Activated naive CD4-positive, alpha-beta T cell treated with anti-CD3 and anti-CD28 coated beads for 36 hours (primary cell): ENCODE measurements at regions of chr11 and their contacts with region 1.

Region 1: DNA sequence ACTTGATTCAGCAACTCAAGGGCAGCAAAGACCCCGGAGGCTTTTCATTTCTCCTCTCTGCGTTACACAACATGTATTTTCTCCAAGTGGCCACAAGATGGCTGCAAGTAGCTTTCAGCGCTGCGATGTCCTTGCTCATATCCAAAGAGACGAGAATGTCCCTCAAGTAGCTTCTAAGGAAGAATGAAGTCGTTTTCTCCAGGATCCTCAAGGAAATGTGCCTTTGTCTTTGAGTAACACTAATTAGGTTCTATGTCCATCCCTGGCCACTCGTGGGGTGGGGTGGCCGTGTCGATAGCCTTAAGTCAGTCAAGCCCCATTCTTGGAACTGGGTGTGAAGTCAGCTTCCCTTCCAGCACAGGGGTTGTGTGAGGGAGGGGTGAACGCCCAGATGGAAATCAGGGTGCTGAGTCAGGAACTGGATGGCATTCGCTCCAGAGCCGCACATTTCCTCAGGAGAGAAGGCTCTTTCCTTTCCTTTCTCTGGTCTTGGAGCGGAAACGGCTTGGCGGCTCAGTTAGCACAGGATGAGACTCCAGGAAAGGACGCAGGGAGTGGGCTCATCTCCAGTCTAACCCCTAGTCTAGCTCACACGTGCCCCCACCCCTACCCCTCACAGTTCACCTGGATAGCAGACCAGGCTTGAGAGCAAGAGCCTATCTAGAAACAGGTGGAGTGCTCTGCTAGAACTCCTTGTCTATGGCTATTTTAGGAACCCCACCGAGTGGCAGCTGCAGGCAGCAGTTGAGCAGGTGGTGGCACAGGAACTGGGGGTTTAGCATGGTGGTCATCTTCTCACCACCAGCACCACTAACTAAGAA is 44.3 kb downstream of the NNMT start:
- DNase-seq: peak; percentile 56
- H3K4me3 Mint-ChIP-seq: peak overlapping the region; percentile 55
- H3K27ac Mint-ChIP-seq: no peak overlapping the region
- H3K4me1 Mint-ChIP-seq: peaks cover 13% of the 10 kb centered on the region
- H3K27me3 Mint-ChIP-seq: no peaks in the 10 kb centered on the region

Region 2: GRCh38 chr11:114280696-114281095 is 59.8 kb before region 1 on chr11:
- CTCF ChIA-PET with region 1: interaction called, 6 read pairs
- intact Hi-C with region 1: loop called (anchors 2 kb)
- DNase-seq: peak; percentile 47
- H3K4me3 Mint-ChIP-seq: no peak overlapping the region
- H3K27ac Mint-ChIP-seq: no peak overlapping the region
- H3K4me1 Mint-ChIP-seq: no peaks in the 10 kb centered on the region
- H3K27me3 Mint-ChIP-seq: peaks cover 5% of the 10 kb centered on the region

Region 3: DNA sequence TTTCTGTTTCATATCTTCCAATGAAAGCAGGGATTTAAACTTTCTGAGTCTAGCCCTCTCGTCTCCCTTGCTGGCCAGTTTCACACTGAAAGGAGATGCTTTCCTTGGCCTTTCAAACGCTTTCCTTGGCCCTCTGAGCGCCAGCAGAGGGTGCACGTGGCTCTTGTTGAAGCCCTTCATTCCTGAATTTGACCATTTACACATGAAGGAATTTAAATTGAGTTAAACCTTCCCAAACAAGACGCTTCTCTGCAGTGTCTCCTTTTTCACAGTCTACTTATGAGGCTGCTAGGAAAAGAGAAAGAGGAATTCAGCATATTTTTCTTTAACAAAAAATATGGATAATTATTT is 22.8 kb before region 1 on chr11:
- CTCF ChIA-PET with region 1: interaction called, 3 read pairs
- intact Hi-C with region 1: loop called (anchors 2 kb)
- DNase-seq: peak; percentile 20
- H3K4me3 Mint-ChIP-seq: no peak overlapping the region
- H3K27ac Mint-ChIP-seq: no peak overlapping the region
- H3K4me1 Mint-ChIP-seq: peaks cover 45% of the 10 kb centered on the region
- H3K27me3 Mint-ChIP-seq: no peaks in the 10 kb centered on the region

Region 4: DNA sequence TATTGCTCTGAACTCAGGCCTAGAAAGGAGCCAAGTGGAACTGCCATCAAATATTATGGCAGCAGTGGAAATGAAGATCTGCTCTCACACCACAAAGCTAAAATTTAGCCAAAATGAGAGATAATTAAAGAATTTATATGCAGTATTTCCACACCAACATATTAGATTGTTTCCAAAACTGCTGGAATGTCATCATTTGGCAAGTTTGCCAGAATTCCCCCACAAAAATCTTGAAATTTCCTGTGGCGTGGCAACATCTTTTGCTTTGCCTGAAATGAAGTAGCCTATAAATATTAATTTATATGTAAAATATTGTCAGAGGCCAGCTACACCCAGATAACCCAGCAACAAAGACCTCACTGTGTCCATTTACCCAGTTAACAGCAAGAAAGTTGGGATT is 46.0 kb after region 1 on chr11:
- CTCF ChIA-PET with region 1: no interaction called
- intact Hi-C with region 1: no loop called
- DNase-seq: no peak
- H3K4me3 Mint-ChIP-seq: no peak overlapping the region
- H3K27ac Mint-ChIP-seq: no peak overlapping the region
- H3K4me1 Mint-ChIP-seq: no peaks in the 10 kb centered on the region
- H3K27me3 Mint-ChIP-seq: peaks cover 2% of the 10 kb centered on the region

Region 5: DNA sequence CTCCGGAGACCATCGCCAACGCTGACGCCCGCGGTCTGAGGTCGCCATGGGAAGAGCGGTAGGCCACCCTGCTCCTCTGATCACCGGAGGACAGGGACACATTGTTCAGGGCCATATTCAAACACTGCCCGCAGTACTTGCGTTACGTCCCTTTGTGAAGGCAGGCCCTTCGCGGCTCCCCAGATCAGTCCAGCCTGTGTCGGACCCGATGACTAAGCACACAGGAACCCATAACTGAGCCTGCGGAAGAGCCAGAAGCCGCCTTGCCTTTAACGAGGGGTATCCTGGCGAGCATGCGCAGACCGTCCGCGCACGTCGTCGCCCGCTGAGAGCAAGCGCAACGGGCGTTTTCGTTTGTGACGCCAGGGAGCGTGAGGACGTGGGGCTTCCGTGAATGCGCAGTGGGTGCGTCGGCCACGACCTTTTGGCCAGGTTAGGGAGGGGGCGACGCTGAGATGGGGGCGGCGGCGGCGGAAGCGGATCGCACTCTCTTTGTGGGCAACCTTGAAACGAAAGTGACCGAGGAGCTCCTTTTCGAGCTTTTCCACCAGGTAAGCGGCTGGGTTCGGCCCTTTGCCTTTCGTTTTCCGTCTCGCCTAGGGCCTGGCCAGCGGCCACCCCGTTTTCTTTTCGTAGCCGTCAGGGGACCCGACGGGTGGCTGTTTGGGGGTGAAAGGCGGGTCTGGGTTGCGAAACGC is 59.8 kb after region 1 on chr11 and contains the starts of genes C11orf71 and RBM7:
- CTCF ChIA-PET with region 1: interaction called, 7 read pairs
- intact Hi-C with region 1: loop called (anchors 2 kb)
- DNase-seq: peak; percentile 98
- H3K4me3 Mint-ChIP-seq: peak within 1 kb of the TSS; percentile 90
- H3K27ac Mint-ChIP-seq: peak within 1 kb of the TSS; percentile 97
- H3K4me1 Mint-ChIP-seq: peaks cover 44% of the 10 kb centered on the region
- H3K27me3 Mint-ChIP-seq: no peaks in the 10 kb centered on the region
- total RNA-seq, gene C11orf71: 7.5 to 7.6 TPM
- total RNA-seq, gene RBM7: 36.9 to 41.7 TPM

Region 6: GRCh38 chr11:114606003-114606801 is 265.7 kb after region 1 on chr11:
- CTCF ChIA-PET with region 1: no interaction called
- intact Hi-C with region 1: loop called (anchors 2 kb)
- DNase-seq: no peak
- H3K4me3 Mint-ChIP-seq: no peak overlapping the region
- H3K27ac Mint-ChIP-seq: no peak overlapping the region
- H3K4me1 Mint-ChIP-seq: no peaks in the 10 kb centered on the region
- H3K27me3 Mint-ChIP-seq: no peaks in the 10 kb centered on the region

Region 7: GRCh38 chr11:114762408-114762807 is 421.9 kb after region 1 on chr11:
- CTCF ChIA-PET with region 1: no interaction called
- intact Hi-C with region 1: loop called (anchors 2 kb)
- DNase-seq: peak; percentile 42
- H3K4me3 Mint-ChIP-seq: no peak overlapping the region
- H3K27ac Mint-ChIP-seq: no peak overlapping the region
- H3K4me1 Mint-ChIP-seq: no peaks in the 10 kb centered on the region
- H3K27me3 Mint-ChIP-seq: peaks cover 28% of the 10 kb centered on the region